HEK293T (cell line): ENCODE measurements at regions of chr20 and their contacts with region 1.

Region 1: GRCh38 chr20:35166242-35166830 is 5.5 kb upstream of the PROCR start:
- DNase-seq: no peak

Region 2: DNA sequence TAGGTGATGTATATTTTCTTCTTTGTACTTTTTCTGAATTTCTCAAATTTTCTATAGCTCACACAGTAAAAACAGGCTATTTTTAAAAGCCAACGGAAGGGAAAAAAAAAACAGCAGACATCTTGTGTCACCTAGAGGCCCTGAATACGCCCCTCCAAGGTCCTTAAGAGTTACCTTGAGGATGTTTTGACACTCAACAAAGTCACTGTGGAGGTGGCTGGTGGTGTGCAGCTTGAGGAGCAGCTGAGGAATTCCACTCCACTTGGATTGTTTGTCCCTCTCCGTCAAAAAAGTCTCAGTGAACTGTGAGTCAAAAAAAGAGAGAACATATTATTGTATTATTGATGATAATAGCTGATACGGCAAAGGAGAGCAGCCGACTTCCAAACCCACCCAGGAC is 88.5 kb before region 1 on chr20:
- CTCF ChIA-PET with region 1: no interaction called
- POLR2A ChIA-PET with region 1: no interaction called
- DNase-seq: no peak

Region 3: DNA sequence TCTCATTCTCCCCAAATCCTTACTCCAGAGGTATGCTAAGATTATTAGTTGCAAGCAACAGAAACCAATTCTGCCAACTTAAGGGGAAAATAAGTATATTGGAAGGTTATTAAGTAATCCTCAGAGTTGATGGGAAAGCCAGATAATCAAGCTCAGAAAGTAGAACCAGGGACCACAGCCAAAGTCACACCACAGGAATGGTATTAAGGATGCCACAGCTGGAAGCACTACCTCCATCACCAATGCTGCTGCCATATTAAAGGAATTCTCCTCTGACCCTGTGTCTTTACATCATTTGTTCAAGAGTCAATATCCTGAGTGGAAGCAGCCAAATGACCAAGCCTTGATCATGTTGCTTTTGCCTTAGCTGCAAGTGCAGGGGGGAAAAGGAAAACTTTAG is 15.4 kb after region 1 on chr20:
- CTCF ChIA-PET with region 1: no interaction called
- POLR2A ChIA-PET with region 1: no interaction called
- DNase-seq: no peak

Region 4: DNA sequence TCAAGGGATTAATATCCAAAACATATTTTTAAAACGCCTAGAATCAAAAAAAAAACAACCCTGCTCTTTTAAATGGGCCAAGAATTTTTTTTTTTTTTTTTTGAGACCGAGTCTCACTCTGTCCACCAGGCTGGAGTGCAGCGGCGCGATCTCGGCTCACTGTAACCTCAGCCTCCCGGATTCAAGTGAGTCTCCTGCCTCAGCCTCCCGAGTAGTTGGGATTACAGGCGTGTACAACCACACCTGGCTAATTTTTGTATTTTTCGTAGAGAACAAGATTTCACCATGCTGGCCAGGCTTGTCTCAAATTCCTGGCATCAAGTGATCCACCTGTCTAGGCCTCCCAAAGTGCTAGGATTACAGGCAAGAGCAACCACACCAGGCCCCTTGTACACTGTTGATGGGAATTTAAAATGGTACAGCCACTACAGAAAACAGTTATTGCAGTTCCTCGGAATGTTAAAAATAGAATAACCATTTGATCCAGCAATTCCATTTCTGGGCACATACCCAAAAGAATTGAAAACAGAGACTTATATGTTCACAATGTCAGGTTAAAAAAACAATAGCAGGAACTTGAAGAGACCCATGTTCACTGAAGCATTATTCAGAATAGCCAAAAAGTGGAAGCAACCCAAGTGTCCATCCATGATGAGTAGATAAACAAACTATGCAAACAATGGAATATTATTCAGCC is 1371.8 kb after region 1 on chr20:
- CTCF ChIA-PET with region 1: interaction called, 10 read pairs
- POLR2A ChIA-PET with region 1: no interaction called
- DNase-seq: no peak